PC-3 (cell line): ENCODE measurements at regions of chr7 and their contacts with region 1.

Region 1: DNA sequence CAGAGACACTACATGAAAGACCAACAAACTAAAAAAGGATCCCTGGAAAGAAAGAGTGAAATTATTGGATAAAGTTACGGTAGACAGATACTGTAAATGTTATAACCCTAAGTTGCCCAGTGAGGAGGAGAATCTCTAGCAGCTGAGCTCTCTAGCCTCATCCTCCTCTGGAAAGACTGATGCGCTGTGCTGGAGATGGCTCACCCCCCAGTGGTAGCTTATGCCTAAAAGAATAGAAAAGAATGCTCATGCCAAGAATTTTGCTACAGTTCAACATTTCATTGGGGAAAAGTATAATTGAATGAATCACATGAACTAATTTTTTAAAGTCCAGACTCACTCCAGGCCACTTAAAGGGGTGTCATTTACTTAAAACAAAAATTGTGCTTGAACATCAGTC is 50.8 kb upstream of the RNF32 start:
- DNase-seq: no peak
- ATAC-seq: no peak
- H3K4me3 ChIP-seq: no peak overlapping the region
- H3K27ac ChIP-seq: no peak overlapping the region
- H3K4me1 ChIP-seq: no peaks in the 10 kb centered on the region
- H3K27me3 ChIP-seq: 0 out of 2 replicates have a peak, but pooled peaks cover 5% of the 10 kb centered on the region
- CTCF ChIP-seq: no peak

Region 2: GRCh38 chr7:156603011-156603410 is 13.2 kb after region 1 on chr7:
- CTCF ChIA-PET with region 1: no interaction called
- POLR2A ChIA-PET with region 1: no interaction called
- intact Hi-C with region 1: loop called (anchors 1 kb)
- DNase-seq: no peak
- ATAC-seq: no peak
- H3K4me3 ChIP-seq: no peak overlapping the region
- H3K27ac ChIP-seq: no peak overlapping the region
- H3K4me1 ChIP-seq: no peaks in the 10 kb centered on the region
- H3K27me3 ChIP-seq: no peaks in the 10 kb centered on the region
- CTCF ChIP-seq: no peak